Natural killer cell (primary cell): ENCODE measurements at regions of chr6 and their contacts with region 1.

Region 1: DNA sequence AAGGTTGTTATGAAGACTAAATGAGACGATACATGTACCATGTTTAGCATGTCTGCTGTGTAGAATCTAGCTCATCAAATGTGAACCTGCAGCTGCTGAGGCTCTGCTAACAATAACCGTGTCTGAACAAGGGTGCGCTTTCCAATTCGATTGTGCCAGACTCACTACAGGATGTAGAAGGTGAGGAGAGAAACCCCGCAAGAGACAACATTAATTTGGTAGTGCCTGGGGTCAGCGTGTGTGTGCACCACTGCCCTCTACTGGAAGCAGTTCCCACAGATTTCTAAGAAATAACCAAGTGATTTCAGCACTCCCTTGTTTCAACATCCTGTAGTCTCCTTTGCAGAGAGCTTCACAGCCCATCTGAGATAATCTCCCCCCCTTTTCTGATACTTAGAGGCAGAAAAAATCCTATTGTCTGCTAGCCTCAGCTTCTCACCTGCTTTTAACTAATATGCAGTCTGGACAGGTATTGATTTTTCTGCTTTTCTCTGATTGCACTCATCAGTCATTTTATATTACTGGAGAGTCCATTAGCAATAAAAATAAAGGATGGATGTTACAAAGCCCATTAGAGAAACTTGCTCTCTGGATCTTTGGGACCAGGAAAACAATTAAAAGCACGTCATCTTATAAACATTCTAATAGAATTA is 96.7 kb upstream of the BACH2 start:
- DNase-seq: peak; percentile 61 to 89
- ATAC-seq: peak; percentile 49 to 76 (median 60)
- H3K4me3 ChIP-seq: no peak overlapping the region
- H3K4me3 Mint-ChIP-seq: no peak overlapping the region
- H3K27ac ChIP-seq: no peak overlapping the region
- H3K27ac Mint-ChIP-seq: peak overlapping the region; percentile 12 to 75
- H3K4me1 ChIP-seq: peaks cover 22% of the 10 kb centered on the region
- H3K4me1 Mint-ChIP-seq: peaks cover 30 to 35% of the 10 kb centered on the region in 2 donors
- H3K27me3 ChIP-seq: no peaks in the 10 kb centered on the region
- H3K27me3 Mint-ChIP-seq: peaks cover 0 to 4% of the 10 kb centered on the region in 2 donors
- CTCF ChIP-seq: peak; percentile 70

Region 2: DNA sequence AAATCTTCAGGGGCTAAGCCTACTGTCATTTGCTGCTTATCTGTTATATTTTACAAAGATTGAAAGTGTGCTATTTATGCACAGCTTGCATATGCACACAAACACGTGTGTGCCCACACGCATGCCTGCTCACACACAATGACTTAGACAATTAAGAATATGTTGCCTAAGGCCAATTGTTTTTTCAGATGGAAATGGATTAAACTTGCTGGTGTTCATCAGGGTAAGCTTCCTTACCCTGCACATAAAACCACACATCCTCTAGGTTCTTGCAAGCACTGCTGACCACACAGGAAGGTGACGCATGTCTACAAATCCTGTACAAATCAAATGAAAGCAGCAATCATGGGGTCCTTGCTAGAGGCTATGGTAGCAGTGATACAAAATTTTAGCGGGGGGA is 440.7 kb before region 1 on chr6:
- intact Hi-C with region 1: loop called (anchors 5 kb)
- DNase-seq: peak; percentile 32 to 87
- ATAC-seq: peak; percentile 86 to 91 (median 87)
- H3K4me3 ChIP-seq: no peak overlapping the region
- H3K4me3 Mint-ChIP-seq: peak overlapping the region; percentile 81
- H3K27ac ChIP-seq: peak overlapping the region; percentile 57
- H3K27ac Mint-ChIP-seq: peak overlapping the region; percentile 81 to 87
- H3K4me1 ChIP-seq: peaks cover 49% of the 10 kb centered on the region
- H3K4me1 Mint-ChIP-seq: peaks cover 49 to 53% of the 10 kb centered on the region in 2 donors
- H3K27me3 ChIP-seq: no peaks in the 10 kb centered on the region
- H3K27me3 Mint-ChIP-seq: no peaks in the 10 kb centered on the region
- CTCF ChIP-seq: no peak

Region 3: GRCh38 chr6:90179190-90180169 is 213.9 kb before region 1 on chr6:
- intact Hi-C with region 1: loop called (anchors 10 kb)
- DNase-seq: peak in 1 of 2 donors; percentile 70
- ATAC-seq: no peak
- H3K4me3 ChIP-seq: no peak overlapping the region
- H3K4me3 Mint-ChIP-seq: no peak overlapping the region
- H3K27ac ChIP-seq: no peak overlapping the region
- H3K27ac Mint-ChIP-seq: no peak overlapping the region
- H3K4me1 ChIP-seq: peaks cover 30% of the 10 kb centered on the region
- H3K4me1 Mint-ChIP-seq: peaks cover 27 to 39% of the 10 kb centered on the region in 2 donors
- H3K27me3 ChIP-seq: no peaks in the 10 kb centered on the region
- H3K27me3 Mint-ChIP-seq: no peaks in the 10 kb centered on the region
- CTCF ChIP-seq: peak; percentile 76

Region 4: GRCh38 chr6:90285611-90286381 is 107.6 kb before region 1 on chr6:
- intact Hi-C with region 1: loop called (anchors 1 kb)
- DNase-seq: peak; percentile 53 to 72
- ATAC-seq: peak; percentile 59 to 78 (median 71)
- H3K4me3 ChIP-seq: peak overlapping the region; percentile 20
- H3K4me3 Mint-ChIP-seq: peak overlapping the region; percentile 93
- H3K27ac ChIP-seq: peak overlapping the region; percentile 66
- H3K27ac Mint-ChIP-seq: peak overlapping the region; percentile 84 to 93
- H3K4me1 ChIP-seq: peaks cover 24% of the 10 kb centered on the region
- H3K4me1 Mint-ChIP-seq: peaks cover 30 to 33% of the 10 kb centered on the region in 2 donors
- H3K27me3 ChIP-seq: no peaks in the 10 kb centered on the region
- H3K27me3 Mint-ChIP-seq: peaks cover 3 to 27% of the 10 kb centered on the region in 2 donors
- CTCF ChIP-seq: no peak

Region 5: DNA sequence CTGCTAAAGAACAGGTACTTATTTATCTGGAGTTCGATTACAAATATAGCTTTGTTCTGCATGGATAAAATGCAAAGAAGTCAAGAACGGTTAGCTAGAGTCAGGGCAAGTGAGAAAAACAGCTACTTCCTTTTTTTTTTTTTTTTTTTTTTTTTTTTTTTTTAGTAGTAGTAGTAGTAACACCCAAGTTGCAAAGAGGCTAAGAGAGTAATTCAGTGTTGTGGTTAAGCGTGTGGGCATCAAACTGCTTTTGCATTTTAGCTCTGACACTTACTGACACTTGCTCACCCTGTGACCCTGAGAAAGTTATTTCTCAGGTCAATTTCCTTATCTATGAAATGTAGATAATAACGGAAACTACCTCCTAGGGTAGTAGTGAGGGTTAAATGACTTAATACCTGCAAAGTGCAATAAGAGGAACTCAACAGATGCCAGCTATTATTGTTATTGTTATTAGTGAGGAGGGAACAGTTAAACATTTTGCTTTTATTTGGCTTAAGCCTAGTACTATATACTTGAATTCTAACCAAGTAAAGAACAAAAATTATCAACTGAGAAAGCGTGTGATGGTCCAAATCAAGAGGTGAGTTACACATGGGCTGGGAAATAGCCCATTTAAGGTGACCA is 10.0 kb before region 1 on chr6:
- intact Hi-C with region 1: loop called (anchors 2 kb)
- DNase-seq: peak in 1 of 2 donors; percentile 57
- ATAC-seq: peak; percentile 76 to 98 (median 96)
- H3K4me3 ChIP-seq: no peak overlapping the region
- H3K4me3 Mint-ChIP-seq: peak overlapping the region; percentile 69
- H3K27ac ChIP-seq: peak overlapping the region; percentile 52
- H3K27ac Mint-ChIP-seq: peak overlapping the region; percentile 79 to 80
- H3K4me1 ChIP-seq: peaks cover 8% of the 10 kb centered on the region
- H3K4me1 Mint-ChIP-seq: peaks cover 15 to 24% of the 10 kb centered on the region in 2 donors
- H3K27me3 ChIP-seq: no peaks in the 10 kb centered on the region
- H3K27me3 Mint-ChIP-seq: peaks cover 4 to 14% of the 10 kb centered on the region in 2 donors
- CTCF ChIP-seq: no peak

Region 6: DNA sequence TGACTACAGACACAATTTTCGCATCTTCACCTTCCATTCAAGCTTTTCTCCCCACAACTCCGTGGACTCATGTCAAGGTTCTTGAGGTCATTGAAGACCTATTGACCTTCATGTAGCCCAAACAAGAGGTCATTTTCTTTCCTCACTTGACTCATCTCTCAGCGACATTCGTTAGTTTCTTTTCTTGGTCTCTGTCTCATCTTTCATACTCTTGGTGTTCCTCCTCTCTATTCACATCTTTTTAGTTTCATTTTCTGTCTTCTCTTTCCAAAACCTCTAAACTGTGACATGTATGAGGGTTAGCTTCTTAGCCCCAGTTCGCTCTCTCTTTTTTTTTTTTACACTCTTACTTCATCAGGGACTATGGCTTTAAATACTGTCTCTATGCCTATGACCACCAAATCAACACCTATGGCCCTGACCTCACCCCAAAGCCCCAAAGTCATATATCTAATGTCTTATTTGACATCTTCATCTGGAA is 31.8 kb after region 1 on chr6:
- intact Hi-C with region 1: loop called (anchors 1 kb)
- DNase-seq: peak; percentile 46 to 63
- ATAC-seq: peak; percentile 92 to 96 (median 93)
- H3K4me3 ChIP-seq: no peak overlapping the region
- H3K4me3 Mint-ChIP-seq: peak overlapping the region; percentile 65
- H3K27ac ChIP-seq: peak overlapping the region; percentile 82
- H3K27ac Mint-ChIP-seq: peak overlapping the region; percentile 84 to 88
- H3K4me1 ChIP-seq: no peaks in the 10 kb centered on the region
- H3K4me1 Mint-ChIP-seq: peaks cover 11% of the 10 kb centered on the region in 2 donors
- H3K27me3 ChIP-seq: no peaks in the 10 kb centered on the region
- H3K27me3 Mint-ChIP-seq: no peaks in the 10 kb centered on the region
- CTCF ChIP-seq: no peak